Activated CD4-positive, alpha-beta memory T cell treated with anti-CD3 and anti-CD28 coated beads, Interleukin-2, amount 10 ng/mL, durations not matched to agents 7 days and 5 days (primary cell): ENCODE measurements at regions of chr20 and their contacts with region 1.

Region 1: GRCh38 chr20:8389381-8390036 is 257.4 kb downstream of the PLCB1 start:
- DNase-seq: no peak
- H3K4me3 Mint-ChIP-seq: no peak overlapping the region
- H3K27ac Mint-ChIP-seq: no peak overlapping the region
- H3K4me1 Mint-ChIP-seq: peaks cover 4% of the 10 kb centered on the region
- H3K27me3 Mint-ChIP-seq: no peaks in the 10 kb centered on the region

Region 2: DNA sequence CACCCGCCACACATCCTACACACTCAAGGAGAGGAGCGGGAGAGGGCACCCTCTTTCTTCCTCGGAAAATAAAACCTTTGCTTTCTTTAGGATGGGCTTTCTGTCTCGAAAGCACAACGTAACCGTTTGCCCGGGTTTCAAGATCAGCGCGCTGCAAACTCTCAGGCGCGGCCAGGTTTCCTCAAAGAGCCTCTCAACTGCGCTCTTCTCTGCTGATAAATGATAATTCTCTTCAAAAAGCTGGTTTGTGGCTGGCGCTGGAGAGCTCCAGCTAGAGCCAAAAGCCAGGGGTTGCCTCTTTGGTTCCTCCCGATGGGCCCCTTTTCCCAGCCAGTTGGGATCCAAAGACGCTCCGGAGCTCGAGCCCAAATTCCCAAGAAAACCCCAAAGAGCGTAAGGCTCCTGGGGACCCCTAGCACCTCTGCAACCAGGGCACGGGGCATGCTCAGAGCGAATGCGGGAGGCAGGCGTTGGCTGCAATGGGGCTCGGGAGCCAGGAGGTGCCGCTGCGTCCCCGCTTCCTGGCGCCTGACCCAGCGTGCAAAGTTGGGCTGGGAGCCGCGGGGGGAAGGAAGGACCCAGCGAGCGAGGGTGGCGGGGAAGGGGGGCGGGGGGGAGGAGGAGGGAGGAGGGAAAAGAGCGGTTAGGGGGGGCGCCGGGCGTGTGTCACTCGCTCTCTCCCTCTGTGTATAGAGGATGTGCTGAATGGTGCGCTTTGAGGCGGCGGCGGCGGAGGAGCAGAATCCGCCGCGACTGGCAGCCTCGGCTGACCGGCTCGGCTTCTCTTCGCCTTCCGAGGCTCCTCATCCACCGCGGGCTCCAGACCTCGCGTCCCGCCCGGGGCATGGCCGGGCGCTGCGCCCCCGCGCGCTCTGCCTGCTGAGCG is 257.7 kb before region 1 on chr20 and contains the start of gene PLCB1:
- CTCF ChIA-PET with region 1: interaction called, 18 read pairs
- POLR2A ChIA-PET with region 1: no interaction called
- DNase-seq: peak; percentile 79
- H3K4me3 Mint-ChIP-seq: peak within 1 kb of the TSS; percentile 68
- H3K27ac Mint-ChIP-seq: no peak within 1 kb of the TSS
- H3K4me1 Mint-ChIP-seq: peaks cover 23% of the 10 kb centered on the region
- H3K27me3 Mint-ChIP-seq: peaks cover 48% of the 10 kb centered on the region
- total RNA-seq, gene PLCB1: 1.9 to 2.2 TPM

Region 3: DNA sequence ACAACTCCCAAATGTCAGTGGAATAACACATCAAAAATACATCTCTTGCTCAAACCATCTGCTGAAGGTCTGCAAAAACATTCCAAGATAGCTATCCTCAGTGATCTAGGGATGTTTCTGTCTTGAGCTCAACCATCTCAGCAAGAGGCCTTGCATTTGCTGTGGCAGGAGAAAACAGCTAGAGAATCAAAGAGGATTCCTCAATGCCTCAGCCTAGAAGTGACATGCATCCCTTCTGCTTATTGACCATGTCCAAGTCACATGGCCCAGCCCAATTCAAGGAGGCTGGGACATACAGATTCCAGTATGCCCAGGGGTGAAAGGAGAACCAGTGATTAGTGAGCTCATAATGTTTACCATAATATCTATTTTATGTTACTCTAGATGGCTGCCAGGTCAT is 12.0 kb after region 1 on chr20:
- CTCF ChIA-PET with region 1: interaction called, 11 read pairs
- POLR2A ChIA-PET with region 1: no interaction called
- DNase-seq: no peak
- H3K4me3 Mint-ChIP-seq: no peak overlapping the region
- H3K27ac Mint-ChIP-seq: no peak overlapping the region
- H3K4me1 Mint-ChIP-seq: peaks cover 8% of the 10 kb centered on the region
- H3K27me3 Mint-ChIP-seq: no peaks in the 10 kb centered on the region

Region 4: DNA sequence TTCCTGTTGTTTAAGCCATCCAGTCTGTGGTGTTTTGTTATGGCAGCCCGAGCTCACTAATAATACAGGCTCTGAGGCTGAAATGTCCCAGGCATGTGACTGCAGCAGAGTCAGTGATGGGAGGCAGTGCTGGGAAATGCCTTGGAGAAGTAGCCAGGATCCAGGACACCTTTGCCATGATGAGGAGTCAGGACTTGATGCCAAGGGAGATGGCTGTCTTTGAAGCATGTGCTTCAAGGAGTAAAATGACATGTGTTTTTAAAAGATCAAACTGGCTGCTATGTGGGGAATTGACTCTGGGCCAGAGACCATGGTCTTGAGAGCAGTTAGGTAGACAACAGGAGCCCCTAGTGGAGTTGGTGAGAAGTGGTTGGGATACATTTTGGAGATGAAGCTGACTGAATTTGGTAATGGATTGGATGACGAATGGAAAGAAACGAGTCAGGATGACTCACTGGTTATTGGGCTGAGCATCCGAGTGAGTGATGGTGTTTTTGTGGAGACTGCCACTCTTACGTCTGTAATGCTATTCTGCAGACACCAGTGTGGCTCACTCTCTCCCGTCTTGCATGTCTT is 64.7 kb after region 1 on chr20:
- CTCF ChIA-PET with region 1: no interaction called
- POLR2A ChIA-PET with region 1: no interaction called
- DNase-seq: no peak
- H3K4me3 Mint-ChIP-seq: no peak overlapping the region
- H3K27ac Mint-ChIP-seq: no peak overlapping the region
- H3K4me1 Mint-ChIP-seq: no peaks in the 10 kb centered on the region
- H3K27me3 Mint-ChIP-seq: no peaks in the 10 kb centered on the region